ENCODE measurements at regions of chr21 and their contacts with region 1.

Region 1: GRCh38 chr21:46144464-46145070 is 10.8 kb downstream of the FTCD start:
- DNase-seq: no peak
- H3K4me3 ChIP-seq: no peak overlapping the region
- H3K27ac ChIP-seq: peak overlapping the region in 1 of 2 donors; percentile 69
- H3K4me1 ChIP-seq: no peaks in the 10 kb centered on the region
- H3K27me3 ChIP-seq: no peaks in the 10 kb centered on the region
- CTCF ChIP-seq: no peak
- POLR2A ChIP-seq: no peak

Region 2: DNA sequence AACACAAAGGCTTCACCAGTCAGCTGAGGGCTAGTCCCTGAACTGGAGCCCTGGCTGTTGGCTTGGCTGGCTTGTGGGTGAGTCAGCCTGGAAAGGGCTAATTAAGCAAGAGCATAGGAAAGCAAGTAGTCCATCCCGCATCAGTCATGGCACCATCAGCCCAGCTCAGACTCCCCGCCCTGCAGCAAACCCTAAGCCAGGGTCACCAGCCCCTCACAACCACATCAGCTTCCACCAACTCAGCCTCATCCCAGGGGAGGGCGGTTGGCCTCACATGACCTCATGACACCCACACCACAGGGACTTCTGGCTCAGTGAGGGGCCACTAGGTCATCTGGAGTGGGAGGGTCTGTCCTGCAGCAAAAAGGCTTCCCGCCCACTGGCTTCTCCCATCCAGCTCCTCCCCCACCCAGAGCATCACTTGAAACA is 46.7 kb after region 1 on chr21:
- intact Hi-C with region 1: no loop called
- DNase-seq: no peak
- H3K4me3 ChIP-seq: no peak overlapping the region
- H3K27ac ChIP-seq: peak overlapping the region; percentile 96 to 99
- H3K4me1 ChIP-seq: peaks cover 23% of the 10 kb centered on the region
- H3K27me3 ChIP-seq: no peaks in the 10 kb centered on the region
- CTCF ChIP-seq: no peak
- POLR2A ChIP-seq: no peak

Region 3: GRCh38 chr21:46228345-46229051 is 83.9 kb after region 1 on chr21 and contains the start of gene LSS:
- intact Hi-C with region 1: loop called (anchors 5 kb)
- DNase-seq: peak; percentile 98
- H3K4me3 ChIP-seq: peak within 1 kb of the TSS; percentile 99
- H3K27ac ChIP-seq: peak within 1 kb of the TSS; percentile 97 to 98
- H3K4me1 ChIP-seq: peaks cover 5% of the 10 kb centered on the region
- H3K27me3 ChIP-seq: no peaks in the 10 kb centered on the region
- CTCF ChIP-seq: no peak
- POLR2A ChIP-seq: peak; percentile 73
- total RNA-seq, gene LSS: 95.5 to 145 TPM

Region 4: GRCh38 chr21:46285761-46286496 is 141.4 kb after region 1 on chr21 and contains the start of gene YBEY:
- intact Hi-C with region 1: loop called (anchors 10 kb)
- DNase-seq: peak; percentile 84
- H3K4me3 ChIP-seq: peak within 1 kb of the TSS; percentile 95 to 99
- H3K27ac ChIP-seq: peak within 1 kb of the TSS; percentile 93 to 94
- H3K4me1 ChIP-seq: peaks cover 7% of the 10 kb centered on the region
- H3K27me3 ChIP-seq: no peaks in the 10 kb centered on the region
- CTCF ChIP-seq: peak; percentile 15 to 66 (median 46)
- POLR2A ChIP-seq: peak; percentile 63
- total RNA-seq, gene YBEY: 28.5 to 30.0 TPM